Right ventricle myocardium inferior (tissue), 1 donor: ENCODE measurements at regions of chr9 and their contacts with region 1.

Region 1: DNA sequence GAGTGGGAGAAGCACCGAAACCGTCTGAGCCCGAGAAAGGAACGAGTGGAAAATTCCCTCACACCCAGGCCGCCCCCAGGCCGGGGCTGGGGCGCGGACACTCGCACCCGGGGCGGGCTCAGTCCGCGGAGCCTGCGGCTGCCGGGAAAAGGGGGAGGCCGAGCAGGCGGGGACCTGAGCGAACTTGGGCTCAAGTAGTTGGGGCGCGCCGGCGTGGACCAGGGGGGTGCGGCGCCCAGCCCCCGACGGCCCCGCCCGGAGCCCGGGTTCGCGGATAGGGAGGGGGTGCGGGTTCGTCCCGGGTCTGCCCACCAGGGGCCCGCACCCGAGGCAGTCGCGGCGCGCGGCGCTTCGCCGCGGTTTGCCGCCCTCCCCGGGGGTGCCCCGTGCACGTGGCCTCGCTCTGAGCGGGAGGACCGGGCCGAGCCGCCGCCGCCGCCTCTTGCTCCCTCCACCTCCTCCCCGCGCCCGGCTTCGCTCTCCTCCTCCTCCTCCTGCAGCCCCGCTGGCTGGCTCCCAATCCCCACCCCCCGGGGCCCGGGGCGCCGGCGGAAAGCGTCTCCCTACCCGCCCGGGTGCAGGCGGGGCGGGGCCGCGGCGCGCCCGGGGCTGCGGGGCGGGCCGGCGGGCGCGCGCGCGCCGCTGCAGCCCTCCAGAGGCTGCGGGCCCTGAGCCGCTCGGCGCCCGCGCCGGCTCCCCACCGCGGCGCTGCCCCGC is 1.1 kb upstream of the NFIB start:
- DNase-seq: peak; percentile 95
- ATAC-seq: peak; percentile 84

Region 2: GRCh38 chr9:13688994-13689600 is 626.0 kb before region 1 on chr9:
- intact Hi-C with region 1: loop called (anchors 10 kb)
- DNase-seq: no peak
- ATAC-seq: no peak

Region 3: GRCh38 chr9:13915591-13916326 is 399.3 kb before region 1 on chr9:
- intact Hi-C with region 1: loop called (anchors 5 kb)
- DNase-seq: no peak
- ATAC-seq: peak; percentile 61

Region 4: DNA sequence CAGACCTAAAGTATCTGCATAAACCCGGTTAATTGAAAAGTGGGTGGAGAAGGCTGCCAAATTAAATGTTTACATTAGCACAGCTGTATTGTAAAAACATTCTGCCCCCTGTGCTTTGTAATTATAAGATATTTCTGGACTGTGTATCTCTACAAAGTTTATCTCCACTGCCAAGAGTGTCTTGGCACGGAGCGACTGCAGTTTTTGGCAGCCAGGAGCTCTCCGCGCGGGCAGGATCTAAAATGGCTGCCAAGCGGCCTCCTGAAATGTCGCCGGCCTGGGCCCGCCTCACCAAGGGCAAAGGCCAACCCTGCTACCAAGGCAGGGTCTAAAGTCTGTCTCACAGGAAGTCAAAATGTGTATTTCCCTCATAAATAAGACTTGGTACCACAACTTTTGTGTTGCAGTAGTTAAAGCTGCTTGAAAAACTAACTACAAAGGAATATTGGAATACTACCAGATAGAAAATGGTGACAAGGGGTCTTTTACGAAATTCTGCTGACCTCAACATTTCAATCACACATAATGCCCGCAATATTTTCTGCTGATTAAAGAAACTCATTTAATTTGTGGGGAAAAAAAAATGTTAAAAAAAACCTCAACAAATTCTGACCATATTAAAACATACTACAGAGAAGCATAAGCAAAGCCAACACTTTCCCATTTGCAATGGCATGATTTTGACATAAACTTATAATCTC is 111.6 kb before region 1 on chr9:
- intact Hi-C with region 1: loop called (anchors 2 kb)
- DNase-seq: peak; percentile 77
- ATAC-seq: peak; percentile 70

Region 5: GRCh38 chr9:14347406-14348122 is 32.5 kb after region 1 on chr9:
- intact Hi-C with region 1: loop called (anchors 2 kb)
- DNase-seq: peak; percentile 75
- ATAC-seq: peak; percentile 67

Region 6: DNA sequence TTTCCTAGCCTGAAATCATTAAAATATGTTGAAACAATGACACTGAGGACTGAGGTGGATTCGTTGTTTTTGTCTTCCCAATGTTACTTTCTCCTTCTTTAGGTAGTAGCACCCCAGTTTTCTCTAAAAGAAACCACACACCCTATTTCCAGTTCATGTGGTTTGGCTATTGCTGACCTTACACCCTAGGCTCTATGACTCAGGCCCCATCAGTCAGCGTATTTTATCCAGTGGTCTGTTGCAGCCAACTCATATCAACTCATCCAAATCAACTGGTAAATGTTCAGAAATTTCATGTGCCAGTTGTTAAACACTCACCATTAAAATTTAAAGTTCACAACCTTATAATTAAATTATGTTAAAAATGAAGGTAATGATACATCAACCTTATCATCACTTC is 43.4 kb after region 1 on chr9:
- intact Hi-C with region 1: no loop called
- DNase-seq: no peak
- ATAC-seq: no peak